Mammary epithelial cell (primary cell): ENCODE measurements at regions of chr3 and their contacts with region 1.

Region 1: GRCh38 chr3:11236595-11237461 is 35.4 kb upstream of the ATG7 start:
- DNase-seq: peak; percentile 68
- H3K4me3 ChIP-seq: no peak overlapping the region
- H3K27ac ChIP-seq: no peak overlapping the region
- H3K4me1 ChIP-seq: peaks cover 30% of the 10 kb centered on the region
- H3K27me3 ChIP-seq: no peaks in the 10 kb centered on the region
- CTCF ChIP-seq: peak; percentile 86 to 92

Region 2: DNA sequence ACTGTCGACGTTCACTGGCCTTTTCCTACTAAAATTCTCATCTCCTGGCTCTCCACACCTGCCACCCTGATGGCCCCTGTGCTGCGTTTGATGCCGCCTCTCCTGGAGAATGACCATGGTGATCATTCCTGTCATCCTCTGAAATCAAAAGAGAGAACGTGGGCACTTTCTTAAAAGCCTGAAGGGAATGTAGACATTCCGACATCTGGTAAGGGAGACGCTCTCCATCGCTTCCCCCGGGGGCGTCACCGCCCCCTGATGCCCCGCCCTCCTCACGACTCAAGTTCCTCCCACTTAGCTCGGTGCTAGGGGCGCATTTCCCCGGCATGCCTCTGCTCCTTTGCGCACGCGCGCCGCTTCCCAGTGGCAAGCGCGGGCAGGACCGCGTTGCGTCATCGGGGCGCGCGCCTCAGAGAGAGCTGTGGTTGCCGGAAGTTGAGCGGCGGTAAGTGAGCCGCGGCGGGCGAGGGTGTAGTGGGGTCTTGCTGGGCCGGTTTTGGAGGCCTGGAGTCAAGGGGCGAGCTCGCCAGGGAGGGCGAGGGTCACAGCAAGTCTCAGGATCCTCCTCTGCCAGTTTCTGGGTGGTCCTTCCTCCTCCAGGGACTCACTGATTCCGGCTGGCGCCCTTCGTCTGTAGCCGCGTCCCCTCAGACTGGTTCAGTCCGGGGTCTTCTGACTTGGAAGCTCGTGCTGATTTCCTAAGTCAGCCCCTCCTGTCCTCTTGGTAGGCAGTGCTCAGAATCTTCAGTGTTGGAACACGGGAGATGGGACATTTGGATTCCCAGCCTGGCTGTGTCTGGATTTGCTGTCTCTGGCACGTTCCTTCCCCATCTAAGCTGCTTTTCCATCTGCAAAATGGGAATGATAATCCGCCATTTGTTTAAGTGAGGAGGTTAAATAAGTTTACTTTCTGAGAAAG is 35.4 kb after region 1 on chr3 and contains the start of gene ATG7:
- CTCF ChIA-PET with region 1: no interaction called
- dilution Hi-C with region 1: no loop called
- in situ Hi-C with region 1: no loop called
- intact Hi-C with region 1: loop called (anchors 1 kb)
- DNase-seq: peak; percentile 92
- H3K4me3 ChIP-seq: peak within 1 kb of the TSS; percentile 83 to 91 (median 91)
- H3K27ac ChIP-seq: peak within 1 kb of the TSS; percentile 96
- H3K4me1 ChIP-seq: peaks cover 13% of the 10 kb centered on the region
- H3K27me3 ChIP-seq: no peaks in the 10 kb centered on the region
- CTCF ChIP-seq: peak in 1 of 2 donors; percentile 12
- total RNA-seq, gene ATG7: 35.3 to 51.2 TPM

Region 3: GRCh38 chr3:11335056-11335608 is 98.3 kb after region 1 on chr3:
- CTCF ChIA-PET with region 1: interaction called, 12 read pairs
- dilution Hi-C with region 1: no loop called
- in situ Hi-C with region 1: loop called (anchors 5 to 10 kb)
- intact Hi-C with region 1: loop called (anchors 1 kb)
- DNase-seq: peak; percentile 62
- H3K4me3 ChIP-seq: no peak overlapping the region
- H3K27ac ChIP-seq: no peak overlapping the region
- H3K4me1 ChIP-seq: peaks cover 3% of the 10 kb centered on the region
- H3K27me3 ChIP-seq: no peaks in the 10 kb centered on the region
- CTCF ChIP-seq: peak; percentile 63 to 70

Region 4: GRCh38 chr3:11438646-11439045 is 201.8 kb after region 1 on chr3:
- CTCF ChIA-PET with region 1: no interaction called
- dilution Hi-C with region 1: no loop called
- in situ Hi-C with region 1: no loop called
- intact Hi-C with region 1: no loop called
- DNase-seq: no peak
- H3K4me3 ChIP-seq: no peak overlapping the region
- H3K27ac ChIP-seq: no peak overlapping the region
- H3K4me1 ChIP-seq: no peaks in the 10 kb centered on the region
- H3K27me3 ChIP-seq: no peaks in the 10 kb centered on the region
- CTCF ChIP-seq: no peak